SK-N-SH (cell line): ENCODE measurements at regions of chr15 and their contacts with region 1.

Region 1: GRCh38 chr15:36501063-36501678 is 78.3 kb upstream of the CDIN1 start:
- DNase-seq: peak; percentile 57
- H3K4me3 ChIP-seq: no peak overlapping the region
- H3K27ac ChIP-seq: peak overlapping the region; percentile 40 to 55
- H3K4me1 ChIP-seq: peaks cover 4 to 12% of the 10 kb centered on the region in 2 experiments; a peak in 2 of 4 replicates
- H3K27me3 ChIP-seq: no peaks in the 10 kb centered on the region
- CTCF ChIP-seq: peak; percentile 87
- EP300 ChIP-seq: no peak
- RAD21 ChIP-seq: peak; percentile 98

Region 2: DNA sequence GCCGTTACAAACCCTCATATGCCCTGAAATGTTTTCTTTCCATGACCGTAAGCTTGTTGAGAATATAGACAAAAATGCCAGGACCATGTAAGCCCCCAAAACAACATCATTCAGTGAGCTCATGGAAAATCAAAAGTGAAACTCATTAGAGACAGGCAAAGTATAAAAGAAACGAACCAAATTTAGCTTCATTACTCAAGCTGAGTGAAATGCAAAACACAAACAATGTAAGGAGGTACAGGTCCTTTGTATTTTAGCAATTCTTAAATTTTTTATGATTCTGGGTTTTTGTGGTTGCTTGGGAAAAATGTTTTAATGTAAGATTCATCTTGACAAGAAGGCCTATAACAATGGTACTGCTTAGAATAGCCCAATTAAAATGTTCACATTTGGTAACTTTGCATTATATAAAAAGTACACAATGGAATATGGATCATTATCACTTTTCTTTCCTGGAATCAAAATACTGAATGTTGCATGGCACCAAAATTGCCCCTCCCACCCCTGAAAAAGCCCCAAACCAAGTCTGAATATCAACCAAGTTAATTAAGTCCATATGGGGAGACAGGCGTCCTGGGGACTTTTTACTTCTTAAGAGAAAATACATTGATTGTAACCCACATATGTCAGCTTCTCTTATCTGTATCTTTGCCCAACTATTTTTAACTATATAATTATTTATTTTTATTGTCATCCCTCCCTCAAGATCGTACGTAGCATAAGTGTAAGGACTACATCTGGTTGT is 169.5 kb before region 1 on chr15:
- CTCF ChIA-PET with region 1: no interaction called
- POLR2A ChIA-PET with region 1: no interaction called
- DNase-seq: no peak
- H3K4me3 ChIP-seq: no peak overlapping the region
- H3K27ac ChIP-seq: no peak overlapping the region
- H3K4me1 ChIP-seq: peaks cover 0 to 9% of the 10 kb centered on the region in 2 experiments; a peak in 1 of 4 replicates
- H3K27me3 ChIP-seq: no peaks in the 10 kb centered on the region
- CTCF ChIP-seq: no peak
- EP300 ChIP-seq: no peak
- RAD21 ChIP-seq: no peak

Region 3: GRCh38 chr15:36479200-36479896 is 21.8 kb before region 1 on chr15:
- CTCF ChIA-PET with region 1: interaction called, 11 read pairs
- POLR2A ChIA-PET with region 1: no interaction called
- DNase-seq: no peak
- H3K4me3 ChIP-seq: no peak overlapping the region
- H3K27ac ChIP-seq: no peak overlapping the region
- H3K4me1 ChIP-seq: no peaks in the 10 kb centered on the region
- H3K27me3 ChIP-seq: no peaks in the 10 kb centered on the region
- CTCF ChIP-seq: no peak
- EP300 ChIP-seq: no peak
- RAD21 ChIP-seq: no peak

Region 4: GRCh38 chr15:36511594-36511993 is 10.4 kb after region 1 on chr15:
- CTCF ChIA-PET with region 1: interaction called, 16 read pairs
- POLR2A ChIA-PET with region 1: no interaction called
- DNase-seq: no peak
- H3K4me3 ChIP-seq: no peak overlapping the region
- H3K27ac ChIP-seq: no peak overlapping the region
- H3K4me1 ChIP-seq: no peaks in the 10 kb centered on the region
- H3K27me3 ChIP-seq: no peaks in the 10 kb centered on the region
- CTCF ChIP-seq: no peak
- EP300 ChIP-seq: no peak
- RAD21 ChIP-seq: no peak

Region 5: GRCh38 chr15:36525430-36525829 is 24.3 kb after region 1 on chr15:
- CTCF ChIA-PET with region 1: interaction called, 13 read pairs
- POLR2A ChIA-PET with region 1: no interaction called
- DNase-seq: no peak
- H3K4me3 ChIP-seq: no peak overlapping the region
- H3K27ac ChIP-seq: no peak overlapping the region
- H3K4me1 ChIP-seq: peaks cover 0 to 8% of the 10 kb centered on the region in 2 experiments; a peak in 2 of 4 replicates
- H3K27me3 ChIP-seq: no peaks in the 10 kb centered on the region
- CTCF ChIP-seq: no peak
- EP300 ChIP-seq: no peak
- RAD21 ChIP-seq: no peak

Region 6: GRCh38 chr15:36671017-36671416 is 169.8 kb after region 1 on chr15:
- CTCF ChIA-PET with region 1: no interaction called
- POLR2A ChIA-PET with region 1: no interaction called
- DNase-seq: no peak
- H3K4me3 ChIP-seq: no peak overlapping the region
- H3K27ac ChIP-seq: no peak overlapping the region
- H3K4me1 ChIP-seq: no peaks in the 10 kb centered on the region; a peak in 1 of 4 replicates
- H3K27me3 ChIP-seq: no peaks in the 10 kb centered on the region
- CTCF ChIP-seq: no peak
- EP300 ChIP-seq: no peak
- RAD21 ChIP-seq: no peak

Region 7: GRCh38 chr15:36831125-36831903 is 330.1 kb after region 1 on chr15:
- CTCF ChIA-PET with region 1: no interaction called
- POLR2A ChIA-PET with region 1: no interaction called
- DNase-seq: no peak
- H3K4me3 ChIP-seq: no peak overlapping the region
- H3K27ac ChIP-seq: peak overlapping the region in 1 of 2 experiments; percentile 71; a peak in 2 of 4 replicates
- H3K4me1 ChIP-seq: peaks cover 0 to 6% of the 10 kb centered on the region in 2 experiments; a peak in 3 of 4 replicates
- H3K27me3 ChIP-seq: no peaks in the 10 kb centered on the region
- CTCF ChIP-seq: no peak
- EP300 ChIP-seq: peak in 1 of 2 experiments; percentile 57; a peak in 2 of 4 replicates
- RAD21 ChIP-seq: no peak

Region 8: GRCh38 chr15:37891766-37892368 is 1390.7 kb after region 1 on chr15:
- CTCF ChIA-PET with region 1: interaction called, 13 read pairs
- POLR2A ChIA-PET with region 1: no interaction called
- DNase-seq: peak; percentile 40
- H3K4me3 ChIP-seq: no peak overlapping the region; a peak in 1 of 4 replicates
- H3K27ac ChIP-seq: peak overlapping the region in 1 of 2 experiments; percentile 34; a peak in 2 of 4 replicates
- H3K4me1 ChIP-seq: peaks cover 0 to 2% of the 10 kb centered on the region in 2 experiments; a peak in 2 of 4 replicates
- H3K27me3 ChIP-seq: no peaks in the 10 kb centered on the region
- CTCF ChIP-seq: peak; percentile 92
- EP300 ChIP-seq: no peak
- RAD21 ChIP-seq: peak; percentile 98